Activated naive CD4-positive, alpha-beta T cell treated with anti-CD3 and anti-CD28 coated beads for 36 hours (primary cell): ENCODE measurements at regions of chr2 and their contacts with region 1.

Region 1: DNA sequence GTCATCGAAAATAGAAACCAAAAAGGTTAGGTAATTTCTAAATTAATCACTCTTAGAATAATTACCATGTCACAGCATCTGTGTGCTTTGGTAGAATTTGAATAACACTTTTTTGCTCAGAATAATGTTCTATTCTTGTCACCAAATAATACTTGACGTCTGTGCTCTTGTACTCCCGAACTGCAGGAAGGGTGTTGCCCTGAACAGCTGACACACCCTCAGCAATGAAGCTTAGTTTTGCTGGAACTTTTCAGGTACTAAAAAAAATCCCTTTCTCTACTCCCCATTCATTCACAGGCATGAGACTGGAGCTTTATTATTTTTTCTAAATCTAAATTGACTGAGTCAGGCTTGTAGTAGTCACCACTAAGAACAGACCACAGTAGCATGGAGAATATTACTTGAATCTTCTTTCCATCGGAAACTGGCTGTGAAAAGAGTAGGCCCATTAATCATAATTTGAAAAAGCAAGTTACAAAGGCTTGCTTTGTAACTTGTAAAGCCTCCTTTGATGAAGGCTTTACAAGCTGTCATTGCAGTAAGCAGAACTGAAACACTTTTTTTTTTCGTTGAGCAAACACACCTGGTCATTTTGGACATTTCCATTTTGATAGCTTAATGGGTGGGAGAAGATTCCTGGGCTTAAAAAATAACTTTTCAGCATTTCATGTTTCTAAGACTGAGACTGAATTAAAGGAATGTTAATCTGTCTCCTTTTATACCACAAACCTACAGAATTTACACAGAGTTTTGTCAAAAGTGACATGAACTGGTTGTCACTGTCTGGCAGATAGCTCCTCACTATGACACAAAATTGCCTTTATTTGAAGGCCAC is 70.3 kb upstream of the PELI1 start:
- DNase-seq: peak; percentile 62
- H3K4me3 Mint-ChIP-seq: peak overlapping the region; percentile 61
- H3K27ac Mint-ChIP-seq: peak overlapping the region; percentile 96
- H3K4me1 Mint-ChIP-seq: peaks cover 63% of the 10 kb centered on the region
- H3K27me3 Mint-ChIP-seq: no peaks in the 10 kb centered on the region

Region 2: GRCh38 chr2:63841254-63842022 is 373.1 kb before region 1 on chr2 and contains the start of gene UGP2:
- CTCF ChIA-PET with region 1: no interaction called
- intact Hi-C with region 1: loop called (anchors 5 kb)
- DNase-seq: peak; percentile 88
- H3K4me3 Mint-ChIP-seq: peak within 1 kb of the TSS; percentile 99
- H3K27ac Mint-ChIP-seq: peak within 1 kb of the TSS; percentile 99
- H3K4me1 Mint-ChIP-seq: peaks cover 37% of the 10 kb centered on the region
- H3K27me3 Mint-ChIP-seq: no peaks in the 10 kb centered on the region
- total RNA-seq, gene UGP2: 82.2 to 93.1 TPM

Region 3: GRCh38 chr2:64036034-64036705 is 178.3 kb before region 1 on chr2:
- CTCF ChIA-PET with region 1: no interaction called
- intact Hi-C with region 1: loop called (anchors 1 kb)
- DNase-seq: peak; percentile 37
- H3K4me3 Mint-ChIP-seq: peak overlapping the region; percentile 25
- H3K27ac Mint-ChIP-seq: peak overlapping the region; percentile 70
- H3K4me1 Mint-ChIP-seq: peaks cover 50% of the 10 kb centered on the region
- H3K27me3 Mint-ChIP-seq: no peaks in the 10 kb centered on the region

Region 4: GRCh38 chr2:64101141-64101591 is 113.3 kb before region 1 on chr2:
- CTCF ChIA-PET with region 1: interaction called, 4 read pairs
- intact Hi-C with region 1: loop called (anchors 1 kb)
- DNase-seq: no peak
- H3K4me3 Mint-ChIP-seq: no peak overlapping the region
- H3K27ac Mint-ChIP-seq: peak overlapping the region; percentile 76
- H3K4me1 Mint-ChIP-seq: peaks cover 51% of the 10 kb centered on the region
- H3K27me3 Mint-ChIP-seq: no peaks in the 10 kb centered on the region

Region 5: DNA sequence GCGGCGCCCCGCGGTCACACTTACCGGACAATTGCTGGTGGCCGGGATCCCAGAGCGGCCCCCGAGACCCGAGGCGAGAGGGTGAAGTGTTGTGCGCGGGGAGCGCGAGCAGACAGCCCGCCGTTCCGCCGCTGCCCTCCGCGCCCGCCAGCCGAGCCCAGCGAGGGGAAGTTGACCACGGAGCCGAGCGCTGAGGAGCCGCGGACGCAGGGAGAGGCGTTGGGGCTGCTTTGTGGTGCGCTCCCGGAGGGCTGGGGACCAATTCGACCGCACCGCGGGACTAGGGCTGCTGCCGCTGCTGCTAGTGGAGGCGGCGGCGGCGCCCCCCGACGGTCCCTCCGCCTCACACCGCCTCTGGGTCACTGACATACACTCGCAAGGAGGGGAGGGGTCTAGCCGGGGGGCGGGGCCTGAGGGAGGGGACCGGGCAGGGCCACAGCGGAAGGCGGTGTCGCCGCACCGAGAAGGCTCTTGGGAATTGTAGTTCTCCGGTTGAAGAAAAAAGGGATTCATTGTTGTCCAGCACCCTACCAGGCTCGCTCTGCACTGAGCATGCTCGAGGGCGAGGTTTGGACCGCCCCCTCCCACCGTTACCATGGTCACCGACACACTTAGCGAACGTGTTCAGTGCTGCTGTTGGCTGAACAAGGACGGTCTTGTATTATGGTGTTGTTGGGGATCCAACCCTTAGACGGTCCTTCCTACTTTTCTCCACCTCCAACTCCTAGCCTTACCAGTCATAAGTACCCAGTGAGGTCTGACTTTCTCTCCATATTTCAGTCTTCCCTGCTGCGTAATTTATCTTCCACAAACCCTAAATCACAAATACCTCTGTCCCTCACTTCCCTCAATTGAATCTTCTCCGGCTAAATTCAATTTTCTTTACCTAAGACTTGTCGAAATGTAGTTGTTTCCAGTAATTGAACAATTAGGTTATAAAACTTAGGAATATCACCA is 70.2 kb before region 1 on chr2 and contains the start of gene PELI1:
- CTCF ChIA-PET with region 1: no interaction called
- intact Hi-C with region 1: loop called (anchors 1 kb)
- DNase-seq: peak; percentile 98
- H3K4me3 Mint-ChIP-seq: peak within 1 kb of the TSS; percentile 94
- H3K27ac Mint-ChIP-seq: peak within 1 kb of the TSS; percentile 94
- H3K4me1 Mint-ChIP-seq: peaks cover 31% of the 10 kb centered on the region
- H3K27me3 Mint-ChIP-seq: no peaks in the 10 kb centered on the region
- total RNA-seq, gene PELI1: 25.7 to 28.0 TPM

Region 6: GRCh38 chr2:64295326-64296139 is 81.0 kb after region 1 on chr2:
- CTCF ChIA-PET with region 1: no interaction called
- intact Hi-C with region 1: loop called (anchors 1 kb)
- DNase-seq: peak; percentile 73
- H3K4me3 Mint-ChIP-seq: no peak overlapping the region
- H3K27ac Mint-ChIP-seq: no peak overlapping the region
- H3K4me1 Mint-ChIP-seq: peaks cover 16% of the 10 kb centered on the region
- H3K27me3 Mint-ChIP-seq: peaks cover 4% of the 10 kb centered on the region

Region 7: DNA sequence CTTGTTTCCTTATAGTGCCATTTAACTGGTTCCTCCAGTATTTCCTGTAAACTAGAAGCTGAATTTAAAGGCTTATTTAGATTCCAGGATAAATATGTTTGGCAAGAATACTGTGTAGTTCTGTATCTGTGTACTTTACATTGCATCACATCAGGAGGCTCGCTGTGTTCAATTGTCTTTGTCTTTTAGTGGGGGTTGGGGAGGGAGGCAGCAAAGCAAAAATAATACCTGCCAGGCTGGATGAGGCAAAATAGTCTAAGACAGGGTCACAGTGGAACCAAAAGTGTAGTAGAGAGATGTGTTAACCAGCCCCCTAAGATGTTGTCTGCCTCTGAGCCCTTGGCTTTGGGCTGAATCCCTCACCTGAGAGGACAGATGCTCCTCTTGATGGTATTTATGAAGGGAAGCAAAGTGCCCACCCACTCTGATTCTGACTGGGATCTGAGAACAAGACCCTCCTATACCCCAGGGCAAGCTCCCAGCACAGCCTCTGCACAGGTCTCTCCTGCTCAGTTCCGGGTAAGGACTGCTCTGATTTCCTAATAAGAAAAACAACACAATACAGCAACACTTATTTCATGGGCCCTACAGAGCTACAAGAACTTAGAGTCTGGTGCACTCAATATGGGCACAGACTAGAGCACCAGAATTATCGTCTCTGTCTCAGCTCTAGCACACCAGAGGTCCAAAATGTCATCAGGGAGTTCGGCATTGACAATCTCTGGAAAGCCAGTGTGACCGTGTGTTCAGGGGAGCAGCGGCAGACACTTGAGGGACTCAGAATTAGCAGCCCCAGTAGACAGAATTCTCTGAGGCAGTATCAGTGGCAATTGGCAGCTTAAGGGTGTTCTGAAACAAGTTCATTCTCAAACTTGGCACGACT is 302.4 kb after region 1 on chr2:
- CTCF ChIA-PET with region 1: no interaction called
- intact Hi-C with region 1: no loop called
- DNase-seq: no peak
- H3K4me3 Mint-ChIP-seq: no peak overlapping the region
- H3K27ac Mint-ChIP-seq: no peak overlapping the region
- H3K4me1 Mint-ChIP-seq: no peaks in the 10 kb centered on the region
- H3K27me3 Mint-ChIP-seq: no peaks in the 10 kb centered on the region

Region 8: DNA sequence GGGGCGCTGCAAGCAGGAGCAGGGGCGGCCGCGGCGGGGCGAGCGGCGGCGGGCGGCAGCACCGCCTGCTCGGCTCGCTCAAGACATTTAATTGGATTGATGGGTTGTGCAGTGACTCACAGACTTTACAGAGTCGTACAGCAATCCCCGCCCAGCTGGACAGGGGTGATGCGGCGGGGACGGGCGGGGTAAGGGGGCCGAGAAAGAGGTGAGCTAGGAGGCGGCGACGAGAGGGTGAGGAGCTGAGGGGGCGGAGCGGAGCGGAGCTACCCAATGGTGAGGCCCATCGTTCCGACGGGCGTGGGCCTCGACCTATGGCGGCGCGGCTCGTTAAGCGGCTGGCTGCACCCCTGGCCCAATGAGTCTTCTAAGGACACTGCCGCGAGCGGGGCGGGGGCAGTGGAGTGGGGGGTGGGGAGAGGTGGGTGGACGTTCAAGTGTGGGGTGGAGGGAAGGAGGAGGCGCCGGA is 536.4 kb after region 1 on chr2:
- CTCF ChIA-PET with region 1: no interaction called
- intact Hi-C with region 1: loop called (anchors 5 kb)
- DNase-seq: peak; percentile 99
- H3K4me3 Mint-ChIP-seq: peak overlapping the region; percentile 99
- H3K27ac Mint-ChIP-seq: peak overlapping the region; percentile 89
- H3K4me1 Mint-ChIP-seq: peaks cover 30% of the 10 kb centered on the region
- H3K27me3 Mint-ChIP-seq: no peaks in the 10 kb centered on the region

Region 9: GRCh38 chr2:65329525-65329924 is 1115.0 kb after region 1 on chr2:
- CTCF ChIA-PET with region 1: no interaction called
- intact Hi-C with region 1: no loop called
- DNase-seq: no peak
- H3K4me3 Mint-ChIP-seq: no peak overlapping the region
- H3K27ac Mint-ChIP-seq: no peak overlapping the region
- H3K4me1 Mint-ChIP-seq: no peaks in the 10 kb centered on the region
- H3K27me3 Mint-ChIP-seq: no peaks in the 10 kb centered on the region